ENCODE measurements at regions of chr1 and their contacts with region 1.

Region 1: DNA sequence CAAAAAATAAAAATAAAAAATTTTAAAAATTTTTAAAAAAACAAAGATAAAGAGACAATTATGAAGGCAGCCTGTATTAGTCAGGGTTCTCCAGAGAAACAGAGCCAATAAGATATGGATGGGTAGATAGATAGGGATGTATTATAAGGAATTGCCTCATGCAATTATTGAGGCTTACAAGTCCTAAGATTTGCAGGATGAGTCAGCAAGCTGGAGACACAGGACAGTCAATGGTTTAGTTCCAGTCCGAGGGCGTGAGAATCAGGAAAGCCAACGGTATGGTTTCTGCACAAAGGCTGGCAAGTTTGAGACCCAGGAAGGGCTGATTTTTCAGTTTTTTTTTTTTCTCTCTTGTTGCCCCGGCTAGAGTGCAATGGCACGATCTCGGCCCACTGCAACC is 24.1 kb upstream of the EIF4G3 start:
- DNase-seq: peak; percentile 56
- H3K4me3 Mint-ChIP-seq: no peak overlapping the region
- H3K27ac Mint-ChIP-seq: no peak overlapping the region
- H3K4me1 Mint-ChIP-seq: peaks cover 5% of the 10 kb centered on the region
- H3K27me3 Mint-ChIP-seq: no peaks in the 10 kb centered on the region
- CTCF ChIP-seq: no peak

Region 2: GRCh38 chr1:20521960-20522861 is 678.6 kb before region 1 on chr1:
- CTCF ChIA-PET with region 1: no interaction called
- POLR2A ChIA-PET with region 1: no interaction called
- intact Hi-C with region 1: loop called (anchors 1 kb)
- DNase-seq: peak; percentile 83
- H3K4me3 Mint-ChIP-seq: peak overlapping the region; percentile 36
- H3K27ac Mint-ChIP-seq: no peak overlapping the region
- H3K4me1 Mint-ChIP-seq: no peaks in the 10 kb centered on the region
- H3K27me3 Mint-ChIP-seq: no peaks in the 10 kb centered on the region
- CTCF ChIP-seq: peak; percentile 83

Region 3: DNA sequence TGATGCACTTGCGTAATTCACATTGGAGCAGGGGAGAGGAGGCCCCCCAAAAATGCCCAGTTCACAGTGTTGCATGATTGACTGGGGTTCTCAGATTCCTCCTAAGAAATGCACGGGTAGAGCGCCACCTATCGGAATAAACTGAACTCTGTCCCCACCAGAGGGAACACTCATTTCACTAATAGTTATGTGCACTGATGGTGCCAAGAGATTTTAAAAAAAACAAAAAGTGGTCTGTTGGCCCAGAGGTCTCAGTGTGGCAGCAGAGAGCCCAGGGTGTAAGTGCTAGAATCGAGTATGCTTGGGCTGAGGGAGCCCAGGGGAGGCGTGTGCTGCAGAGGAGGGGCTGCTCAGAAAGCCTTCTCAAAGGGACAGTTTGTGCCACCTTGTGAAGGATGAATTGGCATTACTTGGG is 560.6 kb before region 1 on chr1:
- CTCF ChIA-PET with region 1: no interaction called
- POLR2A ChIA-PET with region 1: no interaction called
- intact Hi-C with region 1: loop called (anchors 1 kb)
- DNase-seq: peak; percentile 66
- H3K4me3 Mint-ChIP-seq: no peak overlapping the region
- H3K27ac Mint-ChIP-seq: no peak overlapping the region
- H3K4me1 Mint-ChIP-seq: peaks cover 6% of the 10 kb centered on the region
- H3K27me3 Mint-ChIP-seq: no peaks in the 10 kb centered on the region
- CTCF ChIP-seq: peak; percentile 72

Region 4: DNA sequence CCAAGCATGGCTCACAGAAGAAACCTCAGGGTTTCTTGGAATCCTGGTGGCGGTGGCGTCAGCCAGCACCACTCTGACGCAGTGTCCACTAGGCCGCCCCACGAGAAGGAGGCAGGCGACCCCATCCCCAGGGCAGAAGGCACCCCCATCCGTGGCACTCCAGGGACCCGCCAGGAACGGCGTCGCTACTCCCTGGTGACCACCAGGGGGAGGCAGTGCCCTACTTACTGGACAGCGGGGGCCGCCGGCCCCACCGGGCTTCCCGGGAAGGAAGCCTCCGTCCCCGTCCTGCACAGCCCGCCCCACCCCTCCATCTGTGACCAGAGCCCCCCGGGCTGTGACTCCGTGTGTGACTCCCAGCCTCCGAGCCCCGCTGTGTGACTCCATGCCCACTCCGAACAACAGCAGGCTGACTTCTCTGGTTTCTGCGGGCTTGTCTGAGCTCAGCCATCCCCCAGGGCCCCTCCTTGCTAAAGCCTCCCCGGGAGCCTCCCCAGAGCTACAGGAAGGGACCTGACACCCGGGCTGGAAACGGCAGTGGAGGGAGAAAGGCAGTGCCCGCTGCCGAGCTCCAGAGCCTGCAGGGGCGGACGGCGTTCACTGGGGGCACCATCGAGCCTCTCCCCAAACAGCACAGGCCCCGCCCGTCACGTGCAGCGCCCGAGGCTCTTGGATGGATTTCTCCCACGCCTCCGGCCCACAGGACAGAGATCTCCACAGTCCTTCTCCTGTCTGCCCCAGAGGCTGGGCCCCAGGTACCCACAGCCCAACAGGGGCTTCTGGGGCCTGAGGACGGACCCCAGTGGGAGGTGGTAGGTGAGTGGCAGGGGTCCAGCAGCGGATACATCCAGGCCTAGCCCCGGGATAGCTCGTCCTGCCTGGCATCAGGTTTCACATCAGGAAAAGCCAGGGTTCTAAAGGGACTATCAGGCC is 504.1 kb before region 1 on chr1:
- CTCF ChIA-PET with region 1: interaction called, 87 read pairs
- POLR2A ChIA-PET with region 1: interaction called, 7 read pairs
- intact Hi-C with region 1: loop called (anchors 1 kb)
- DNase-seq: peak; percentile 86
- H3K4me3 Mint-ChIP-seq: peak overlapping the region; percentile 82
- H3K27ac Mint-ChIP-seq: peak overlapping the region; percentile 76
- H3K4me1 Mint-ChIP-seq: peaks cover 11% of the 10 kb centered on the region
- H3K27me3 Mint-ChIP-seq: no peaks in the 10 kb centered on the region
- CTCF ChIP-seq: peak; percentile 94

Region 5: DNA sequence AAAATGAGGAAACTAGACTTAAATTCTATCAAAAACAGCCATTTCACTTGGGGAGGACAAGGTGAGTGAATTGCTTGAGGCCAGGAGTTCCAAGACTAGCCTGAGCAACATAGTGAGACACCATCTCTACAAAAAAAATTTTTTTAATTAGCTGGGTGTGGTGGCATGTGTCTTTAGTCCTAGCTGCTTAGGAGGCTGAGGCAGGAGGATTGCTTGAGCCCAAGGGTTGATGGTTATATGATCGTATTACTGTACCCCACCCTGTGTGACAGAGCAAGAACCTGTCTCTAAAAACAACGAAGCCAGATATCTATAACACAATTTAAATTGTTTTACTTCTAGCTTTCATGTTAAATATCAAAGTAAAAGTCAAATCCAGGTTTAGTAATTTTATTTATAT is 287.5 kb before region 1 on chr1:
- CTCF ChIA-PET with region 1: no interaction called
- POLR2A ChIA-PET with region 1: no interaction called
- intact Hi-C with region 1: no loop called
- DNase-seq: no peak
- H3K4me3 Mint-ChIP-seq: no peak overlapping the region
- H3K27ac Mint-ChIP-seq: no peak overlapping the region
- H3K4me1 Mint-ChIP-seq: no peaks in the 10 kb centered on the region
- H3K27me3 Mint-ChIP-seq: no peaks in the 10 kb centered on the region
- CTCF ChIP-seq: no peak

Region 6: GRCh38 chr1:20981915-20982314 is 218.9 kb before region 1 on chr1:
- CTCF ChIA-PET with region 1: interaction called, 18 read pairs
- POLR2A ChIA-PET with region 1: no interaction called
- intact Hi-C with region 1: loop called (anchors 1 kb)
- DNase-seq: peak; percentile 40
- H3K4me3 Mint-ChIP-seq: no peak overlapping the region
- H3K27ac Mint-ChIP-seq: no peak overlapping the region
- H3K4me1 Mint-ChIP-seq: peaks cover 5% of the 10 kb centered on the region
- H3K27me3 Mint-ChIP-seq: no peaks in the 10 kb centered on the region
- CTCF ChIP-seq: no peak

Region 7: GRCh38 chr1:21077085-21077484 is 123.7 kb before region 1 on chr1:
- CTCF ChIA-PET with region 1: no interaction called
- POLR2A ChIA-PET with region 1: no interaction called
- intact Hi-C with region 1: no loop called
- DNase-seq: peak; percentile 67
- H3K4me3 Mint-ChIP-seq: no peak overlapping the region
- H3K27ac Mint-ChIP-seq: peak overlapping the region; percentile 81
- H3K4me1 Mint-ChIP-seq: peaks cover 13% of the 10 kb centered on the region
- H3K27me3 Mint-ChIP-seq: no peaks in the 10 kb centered on the region
- CTCF ChIP-seq: no peak

Region 8: GRCh38 chr1:21184276-21184675 is 16.5 kb before region 1 on chr1:
- CTCF ChIA-PET with region 1: interaction called, 10 read pairs
- POLR2A ChIA-PET with region 1: no interaction called
- intact Hi-C with region 1: no loop called
- DNase-seq: no peak
- H3K4me3 Mint-ChIP-seq: no peak overlapping the region
- H3K27ac Mint-ChIP-seq: no peak overlapping the region
- H3K4me1 Mint-ChIP-seq: no peaks in the 10 kb centered on the region
- H3K27me3 Mint-ChIP-seq: no peaks in the 10 kb centered on the region
- CTCF ChIP-seq: no peak